ENCODE measurements at regions of chr2 and their contacts with region 1.

Region 1: GRCh38 chr2:98487806-98488651 is 43.4 kb downstream of the INPP4A start:
- DNase-seq: no peak
- H3K4me3 ChIP-seq: no peak overlapping the region
- H3K27ac ChIP-seq: no peak overlapping the region
- H3K4me1 ChIP-seq: peaks cover 0 to 8% of the 10 kb centered on the region in 2 experiments; a peak in 1 of 4 replicates
- H3K27me3 ChIP-seq: no peaks in the 10 kb centered on the region
- CTCF ChIP-seq: peak; percentile 59
- EP300 ChIP-seq: no peak
- RAD21 ChIP-seq: peak; percentile 32; the same call in 1 of the 2 replicates

Region 2: GRCh38 chr2:98476192-98476868 is 11.7 kb before region 1 on chr2:
- CTCF ChIA-PET with region 1: interaction called, 11 read pairs
- POLR2A ChIA-PET with region 1: no interaction called
- DNase-seq: no peak
- H3K4me3 ChIP-seq: no peak overlapping the region
- H3K27ac ChIP-seq: no peak overlapping the region
- H3K4me1 ChIP-seq: peaks cover 32 to 78% of the 10 kb centered on the region in 2 experiments
- H3K27me3 ChIP-seq: no peaks in the 10 kb centered on the region
- CTCF ChIP-seq: no peak
- EP300 ChIP-seq: no peak
- RAD21 ChIP-seq: no peak

Region 3: DNA sequence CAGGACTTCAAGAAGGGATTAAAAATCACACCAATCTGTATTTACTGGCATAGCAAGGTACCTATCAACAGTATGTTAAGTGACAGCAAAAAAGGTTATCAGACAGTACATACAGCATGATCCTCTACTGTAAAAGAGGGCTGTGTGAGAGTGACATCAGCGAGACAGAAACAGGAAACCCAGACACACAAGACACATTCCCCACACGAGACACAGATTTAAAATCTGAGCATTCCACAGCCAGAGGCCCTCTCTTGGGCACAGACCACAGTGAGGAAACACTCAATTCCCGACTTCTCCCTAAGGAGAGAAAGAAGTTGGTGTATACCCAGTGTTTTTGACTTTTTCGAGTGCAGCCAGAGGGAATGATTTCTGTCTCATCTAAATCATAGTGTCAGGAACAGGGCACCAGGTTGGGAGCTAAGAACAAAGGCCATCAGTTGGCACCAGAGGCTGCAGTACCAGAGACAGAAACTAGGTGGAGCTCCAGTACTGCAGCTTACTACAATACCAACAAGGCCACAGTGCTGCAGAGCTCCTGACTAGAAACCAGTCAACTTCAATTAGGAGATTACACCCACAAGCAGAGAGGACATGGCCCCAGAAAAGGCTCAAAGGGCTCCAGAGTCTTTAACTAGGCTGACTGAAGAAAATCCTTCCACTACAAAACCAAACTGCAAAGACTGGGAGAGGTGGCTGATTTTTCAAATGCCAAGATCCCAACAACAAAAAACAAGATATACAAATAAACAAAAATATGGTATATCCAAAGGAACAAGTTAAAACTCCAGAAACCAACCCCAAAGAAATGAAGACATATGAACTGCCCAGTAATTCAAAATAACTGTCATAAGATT is 161.3 kb after region 1 on chr2:
- CTCF ChIA-PET with region 1: no interaction called
- POLR2A ChIA-PET with region 1: no interaction called
- DNase-seq: peak; percentile 70
- H3K4me3 ChIP-seq: no peak overlapping the region; a peak in 1 of 4 replicates
- H3K27ac ChIP-seq: peak overlapping the region in 1 of 2 experiments; percentile 11; a peak in 1 of 4 replicates
- H3K4me1 ChIP-seq: no peaks in the 10 kb centered on the region
- H3K27me3 ChIP-seq: no peaks in the 10 kb centered on the region
- CTCF ChIP-seq: peak; percentile 98
- EP300 ChIP-seq: no peak
- RAD21 ChIP-seq: peak; percentile 99